GM13976 (cell line): ENCODE measurements at regions of chr1 and their contacts with region 1.

Region 1: DNA sequence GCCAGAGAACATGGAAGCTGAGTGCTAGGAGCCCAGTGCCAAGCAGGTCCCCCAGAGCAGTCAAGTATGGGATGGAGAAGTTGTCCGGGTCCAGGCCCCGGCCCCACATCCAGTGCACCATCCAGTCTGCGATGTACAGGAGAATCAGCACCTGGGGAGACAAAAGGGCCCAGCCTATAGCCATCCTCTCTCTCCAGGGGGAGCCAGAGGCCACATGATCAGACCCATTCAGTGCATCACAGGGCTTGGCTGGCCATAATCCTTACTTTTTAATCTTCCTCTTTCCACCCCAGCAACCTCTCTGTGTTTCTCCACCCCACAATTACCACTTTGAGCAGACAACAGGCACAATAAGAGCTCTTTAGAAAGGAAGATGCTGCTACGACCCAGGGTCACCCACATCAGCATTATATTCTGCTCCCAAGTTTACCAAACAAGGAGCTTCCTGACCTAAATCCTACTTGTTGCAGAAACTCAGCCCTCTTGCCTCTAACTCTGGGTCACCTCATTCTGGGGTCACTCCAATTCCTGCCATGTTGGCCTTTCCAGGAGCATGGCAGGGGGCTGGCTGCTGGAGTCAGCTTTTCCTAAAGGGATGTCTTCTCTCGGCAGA is 16.4 kb upstream of the RAB29 start:
- DNase-seq: peak; percentile 79
- CTCF ChIP-seq: peak; percentile 74

Region 2: GRCh38 chr1:205528887-205529825 is 262.5 kb before region 1 on chr1:
- in situ Hi-C with region 1: no loop called
- DNase-seq: peak; percentile 93
- CTCF ChIP-seq: peak; percentile 97

Region 3: DNA sequence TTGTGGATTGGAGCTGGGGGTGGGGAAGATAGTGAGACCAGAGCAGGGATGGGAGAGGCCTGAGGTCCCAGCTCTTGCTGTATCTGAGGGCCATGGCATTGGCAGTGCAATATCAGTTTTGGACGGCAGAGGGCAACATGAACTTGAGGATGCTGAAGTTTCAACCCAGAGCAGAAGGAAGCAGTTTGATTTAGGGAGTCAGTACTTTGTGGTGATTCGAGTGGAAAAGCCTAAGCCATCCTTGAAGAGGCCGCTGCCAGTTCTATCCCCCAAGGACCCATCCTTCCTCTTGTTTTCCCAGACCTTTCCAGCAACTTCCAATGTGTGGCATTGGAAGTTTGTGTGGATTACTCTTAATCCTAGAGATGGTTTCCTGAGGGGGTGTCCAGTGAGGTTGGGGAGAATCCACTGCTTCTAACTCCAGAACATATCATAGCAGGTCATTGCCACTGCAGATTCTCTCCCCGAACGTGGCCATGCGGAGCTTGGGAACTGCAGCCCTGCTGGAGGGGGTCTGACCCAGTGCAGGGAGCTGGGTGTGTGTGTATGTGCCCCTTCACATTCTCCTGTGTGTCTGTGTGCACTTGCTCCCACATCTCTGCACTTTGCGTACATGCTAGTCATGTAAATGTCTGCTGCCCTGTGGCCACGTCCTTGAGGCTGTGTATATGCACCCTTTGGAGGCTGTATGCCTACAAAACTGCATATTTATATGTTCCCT is 127.5 kb after region 1 on chr1:
- in situ Hi-C with region 1: loop called (anchors 10 kb)
- DNase-seq: peak; percentile 83
- CTCF ChIP-seq: peak; percentile 94

Region 4: GRCh38 chr1:205977402-205978014 is 185.8 kb after region 1 on chr1:
- in situ Hi-C with region 1: loop called (anchors 10 kb)
- DNase-seq: peak; percentile 83
- CTCF ChIP-seq: peak; percentile 97